Activated T-helper 2 cell treated with anti-CD3 and anti-CD28 coated beads, Interferon-gamma antibody, Interleukin-2, Interleukin-4, amounts not matched to agents 10 μg/mL and 5 μg/mL and 100 μg/mL, durations not matched to agents 14 hours and 24 hours and 36 hours (primary cell): ENCODE measurements at regions of chr1 and their contacts with region 1.

Region 1: DNA sequence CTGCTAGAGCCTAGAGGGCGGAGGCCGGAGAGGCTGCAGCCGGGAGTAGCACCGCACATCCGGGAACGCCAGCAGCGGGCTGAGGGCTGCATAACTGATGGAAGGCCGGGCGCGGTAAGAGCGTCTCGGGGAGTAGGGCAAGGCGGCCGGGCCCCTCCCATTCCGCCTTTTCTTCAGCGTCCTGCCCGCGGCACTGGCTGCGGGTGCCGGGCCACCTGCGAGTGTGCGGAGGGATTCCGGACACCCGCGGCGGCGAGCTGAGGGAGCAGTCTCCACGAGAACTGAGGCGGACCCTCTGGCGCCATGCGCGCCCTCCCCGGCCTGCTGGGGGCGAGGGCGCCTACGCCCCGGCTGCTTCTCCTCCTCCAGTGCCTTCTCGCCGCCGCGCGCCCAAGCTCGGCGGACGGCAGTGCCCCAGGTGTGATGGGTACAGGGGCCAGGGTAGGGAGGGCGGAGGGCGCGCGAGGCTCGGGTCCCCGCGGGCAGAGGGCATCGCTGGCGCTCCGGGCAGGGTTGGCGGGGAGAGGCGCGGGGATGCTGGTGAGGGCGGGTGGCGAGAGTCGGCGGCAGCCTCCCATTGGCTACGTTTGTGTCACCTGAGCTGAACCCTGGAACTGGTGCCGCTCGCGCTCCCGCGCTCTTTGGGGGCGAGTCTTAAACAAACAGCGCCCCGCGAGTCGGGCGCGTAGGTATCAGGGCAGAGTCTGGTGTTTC is 334.4 kb downstream of the SRGAP2C start:
- DNase-seq: peak; percentile 86
- H3K4me3 Mint-ChIP-seq: peak overlapping the region; percentile 94
- H3K27ac Mint-ChIP-seq: peak overlapping the region; percentile 94
- H3K4me1 Mint-ChIP-seq: peaks cover 63% of the 10 kb centered on the region
- H3K27me3 Mint-ChIP-seq: no peaks in the 10 kb centered on the region

Region 2: GRCh38 chr1:121443001-121443540 is 76.1 kb before region 1 on chr1:
- intact Hi-C with region 1: loop called (anchors 5 kb)
- DNase-seq: no peak
- H3K4me3 Mint-ChIP-seq: no peak overlapping the region
- H3K27ac Mint-ChIP-seq: peak overlapping the region; percentile 4
- H3K4me1 Mint-ChIP-seq: peaks cover 32% of the 10 kb centered on the region
- H3K27me3 Mint-ChIP-seq: peaks cover under 1% of the 10 kb centered on the region

Region 3: DNA sequence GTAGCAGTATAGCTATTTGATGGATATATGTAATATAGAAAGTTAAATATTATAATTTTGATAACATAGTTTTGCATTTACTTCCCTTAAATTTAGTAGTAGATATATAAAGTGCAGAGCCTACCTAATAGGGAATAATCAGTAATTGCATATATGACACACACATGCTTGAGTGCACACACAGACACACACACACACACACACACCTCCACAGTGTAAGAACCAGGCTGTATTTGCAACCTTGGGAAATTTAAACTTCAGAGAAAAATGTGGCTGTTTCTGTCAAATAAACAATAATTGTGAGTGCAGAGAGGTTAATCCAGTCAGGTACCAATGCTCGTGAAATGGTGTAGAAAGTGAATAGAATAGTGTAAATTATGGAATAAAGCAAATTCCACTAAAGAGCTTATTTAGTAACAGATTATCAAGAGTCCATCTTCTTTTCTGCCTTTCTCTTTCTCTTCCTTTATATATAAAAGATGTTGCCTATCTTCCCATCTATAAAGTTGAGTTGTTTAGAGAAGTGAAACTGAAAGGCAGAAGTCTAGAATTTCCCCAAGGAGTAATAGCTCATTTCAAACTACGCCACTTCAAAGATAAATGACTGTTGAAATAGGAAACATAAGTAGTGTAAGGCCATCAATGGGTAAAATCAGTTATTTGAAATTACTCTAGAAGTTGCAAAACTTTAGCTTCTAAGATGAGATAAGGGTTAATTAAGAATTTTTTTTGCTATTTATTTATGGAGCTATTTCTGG is 60.7 kb before region 1 on chr1:
- intact Hi-C with region 1: loop called (anchors 1 kb)
- DNase-seq: no peak
- H3K4me3 Mint-ChIP-seq: no peak overlapping the region
- H3K27ac Mint-ChIP-seq: no peak overlapping the region
- H3K4me1 Mint-ChIP-seq: peaks cover 43% of the 10 kb centered on the region
- H3K27me3 Mint-ChIP-seq: peaks cover 4% of the 10 kb centered on the region

Region 4: DNA sequence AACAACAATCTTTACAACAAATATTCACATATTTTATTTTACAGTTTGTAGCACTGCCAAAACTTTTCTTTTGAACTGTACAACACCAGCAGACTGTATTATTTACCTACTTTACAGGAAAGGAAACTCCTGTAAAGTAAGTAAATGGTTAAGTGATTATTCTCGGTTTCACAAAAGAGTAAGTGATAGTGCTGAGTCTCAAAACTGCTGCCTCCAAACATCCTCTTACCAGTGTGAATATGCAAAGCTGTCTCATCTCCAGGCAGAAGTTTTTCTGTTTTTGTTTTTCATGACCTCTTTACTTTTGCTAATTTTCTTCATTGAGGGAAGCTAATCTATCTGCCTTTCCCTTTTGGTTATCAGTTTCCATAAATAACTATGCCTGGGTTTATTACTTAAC is 47.7 kb before region 1 on chr1:
- intact Hi-C with region 1: loop called (anchors 2 kb)
- DNase-seq: no peak
- H3K4me3 Mint-ChIP-seq: no peak overlapping the region
- H3K27ac Mint-ChIP-seq: peak overlapping the region; percentile 9
- H3K4me1 Mint-ChIP-seq: peaks cover 46% of the 10 kb centered on the region
- H3K27me3 Mint-ChIP-seq: no peaks in the 10 kb centered on the region

Region 5: GRCh38 chr1:121483961-121484424 is 35.2 kb before region 1 on chr1:
- intact Hi-C with region 1: loop called (anchors 1 kb)
- DNase-seq: no peak
- H3K4me3 Mint-ChIP-seq: no peak overlapping the region
- H3K27ac Mint-ChIP-seq: peak overlapping the region; percentile 60
- H3K4me1 Mint-ChIP-seq: peaks cover 29% of the 10 kb centered on the region
- H3K27me3 Mint-ChIP-seq: no peaks in the 10 kb centered on the region

Region 6: DNA sequence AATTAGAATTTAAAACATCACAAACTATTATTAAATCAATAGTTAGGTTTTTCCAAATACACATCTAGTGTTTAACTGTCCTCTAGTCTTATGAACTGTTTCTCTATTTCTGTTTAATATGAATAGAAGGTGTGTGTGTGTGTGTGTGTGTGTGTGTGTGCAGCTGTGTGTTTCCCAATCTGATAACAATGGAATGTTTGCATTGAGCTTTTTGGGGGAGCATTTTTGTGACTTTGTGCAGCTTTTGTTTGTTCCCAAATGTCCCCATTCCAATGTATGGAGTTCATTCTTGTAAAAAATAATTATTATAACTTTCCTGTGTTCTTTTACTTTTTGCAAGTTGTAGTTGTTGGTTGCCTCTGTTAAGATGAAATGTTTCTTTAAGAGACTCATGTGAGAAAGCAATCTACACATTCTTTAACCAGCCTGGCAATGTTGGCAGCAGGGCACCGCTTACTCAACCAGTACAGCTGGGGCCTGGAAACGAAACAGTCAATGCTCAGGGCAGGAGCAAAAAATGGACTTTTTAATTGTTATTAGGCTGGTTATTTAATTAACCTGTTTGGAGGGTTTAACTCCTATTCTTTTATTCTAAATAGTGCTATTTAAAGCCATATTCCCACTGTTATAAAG is 19.9 kb after region 1 on chr1:
- intact Hi-C with region 1: no loop called
- DNase-seq: no peak
- H3K4me3 Mint-ChIP-seq: no peak overlapping the region
- H3K27ac Mint-ChIP-seq: no peak overlapping the region
- H3K4me1 Mint-ChIP-seq: peaks cover 4% of the 10 kb centered on the region
- H3K27me3 Mint-ChIP-seq: no peaks in the 10 kb centered on the region